Upper lobe of right lung (tissue), 1 donor: ENCODE measurements at regions of chr11 and their contacts with region 1.

Region 1: DNA sequence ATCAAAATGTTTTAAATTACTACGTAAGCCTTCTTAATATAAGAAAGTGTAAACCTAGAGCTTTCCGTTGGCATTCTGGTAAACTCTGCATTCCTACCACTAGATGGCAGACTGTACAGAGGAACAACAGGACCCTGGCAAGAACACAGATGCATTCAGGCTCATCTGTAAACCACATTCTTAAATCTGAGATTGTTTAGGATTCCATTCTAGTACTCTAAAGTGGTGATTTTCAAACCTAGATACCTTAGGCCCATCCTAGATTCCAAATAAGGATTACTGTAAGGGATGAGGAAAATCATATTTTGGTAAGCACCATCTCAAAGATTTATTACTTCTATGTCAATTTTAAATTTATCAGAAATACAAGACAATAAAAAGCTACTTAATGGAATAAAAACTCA is 26.9 kb downstream of the PICALM start:
- DNase-seq: no peak
- ATAC-seq: peak; percentile 99
- H3K4me3 ChIP-seq: no peak overlapping the region
- H3K27ac ChIP-seq: peak overlapping the region; percentile 44
- H3K4me1 ChIP-seq: peaks cover 64% of the 10 kb centered on the region
- H3K27me3 ChIP-seq: no peaks in the 10 kb centered on the region
- CTCF ChIP-seq: peak; percentile 92

Region 2: DNA sequence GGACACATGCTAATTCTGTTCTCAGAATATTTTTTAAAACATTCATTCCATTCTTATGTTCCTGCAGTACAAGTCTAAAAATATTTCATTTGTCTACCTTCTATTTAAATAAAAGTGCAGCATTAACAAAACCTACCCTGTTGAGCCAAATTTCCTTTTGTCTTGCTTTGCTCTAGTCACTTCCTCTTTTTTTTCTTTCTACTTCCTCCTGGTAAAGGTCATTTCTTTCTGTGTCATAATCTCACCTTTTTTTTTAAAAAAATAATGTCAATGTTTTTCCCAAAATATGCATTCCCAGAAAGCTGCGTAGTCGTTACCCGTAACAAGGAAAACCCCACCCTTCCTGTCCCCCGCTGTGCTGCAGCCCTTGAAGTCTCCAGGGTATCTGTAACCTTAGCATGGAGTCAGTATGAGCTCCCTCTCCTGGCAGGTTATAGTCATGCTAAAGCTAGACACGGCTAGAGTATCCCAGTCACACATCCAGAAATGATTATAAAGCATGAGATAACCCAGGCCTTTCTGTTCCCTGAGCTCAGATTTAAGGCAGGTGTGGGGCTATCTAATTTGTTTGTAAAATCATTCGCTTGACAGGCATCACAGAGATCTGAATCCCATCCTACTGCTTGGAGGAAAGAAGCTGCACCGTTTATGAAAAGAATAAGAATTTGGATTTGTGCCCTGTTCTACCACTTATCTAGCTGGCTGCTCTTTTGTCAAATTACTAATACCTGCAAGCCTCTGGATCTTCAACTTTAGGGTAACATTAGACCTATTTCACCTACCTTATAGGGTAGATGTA is 151.5 kb after region 1 on chr11:
- intact Hi-C with region 1: loop called (anchors 10 kb)
- DNase-seq: peak; percentile 70
- ATAC-seq: peak; percentile 99
- H3K4me3 ChIP-seq: peak overlapping the region; percentile 12
- H3K27ac ChIP-seq: peak overlapping the region; percentile 42
- H3K4me1 ChIP-seq: peaks cover 16% of the 10 kb centered on the region
- H3K27me3 ChIP-seq: no peaks in the 10 kb centered on the region
- CTCF ChIP-seq: peak; percentile 78